Activated CD4-positive, alpha-beta T cell treated with anti-CD3 and anti-CD28 coated beads, Interleukin-2, amount 10 ng/mL, durations not matched to agents 24 days and 14 days (primary cell): ENCODE measurements at regions of chr18 and their contacts with region 1.

Region 1: GRCh38 chr18:3062798-3063680 is 50.1 kb upstream of the LPIN2 start:
- DNase-seq: peak; percentile 93
- H3K4me3 Mint-ChIP-seq: peak overlapping the region; percentile 62
- H3K27ac Mint-ChIP-seq: peak overlapping the region; percentile 79
- H3K4me1 Mint-ChIP-seq: peaks cover 66% of the 10 kb centered on the region
- H3K27me3 Mint-ChIP-seq: no peaks in the 10 kb centered on the region

Region 2: GRCh38 chr18:2932247-2933181 is 130.5 kb before region 1 on chr18:
- intact Hi-C with region 1: loop called (anchors 1 kb)
- DNase-seq: peak; percentile 88
- H3K4me3 Mint-ChIP-seq: peak overlapping the region; percentile 6
- H3K27ac Mint-ChIP-seq: peak overlapping the region; percentile 92
- H3K4me1 Mint-ChIP-seq: peaks cover 35% of the 10 kb centered on the region
- H3K27me3 Mint-ChIP-seq: no peaks in the 10 kb centered on the region

Region 3: GRCh38 chr18:3012964-3013804 is 49.9 kb before region 1 on chr18 and contains the start of gene LPIN2:
- intact Hi-C with region 1: loop called (anchors 1 kb)
- DNase-seq: peak; percentile 99
- H3K4me3 Mint-ChIP-seq: peak within 1 kb of the TSS; percentile 93
- H3K27ac Mint-ChIP-seq: peak within 1 kb of the TSS; percentile 96
- H3K4me1 Mint-ChIP-seq: peaks cover 56% of the 10 kb centered on the region
- H3K27me3 Mint-ChIP-seq: no peaks in the 10 kb centered on the region
- total RNA-seq, gene LPIN2: 111 and 118 TPM in 2 replicates

Region 4: GRCh38 chr18:3046216-3046808 is 16.7 kb before region 1 on chr18:
- intact Hi-C with region 1: loop called (anchors 1 kb)
- DNase-seq: peak; percentile 56
- H3K4me3 Mint-ChIP-seq: no peak overlapping the region
- H3K27ac Mint-ChIP-seq: peak overlapping the region; percentile 87
- H3K4me1 Mint-ChIP-seq: peaks cover 27% of the 10 kb centered on the region
- H3K27me3 Mint-ChIP-seq: no peaks in the 10 kb centered on the region